Uterus (tissue), 4 donors: ENCODE measurements at regions of chr17 and their contacts with region 1.

Region 1: DNA sequence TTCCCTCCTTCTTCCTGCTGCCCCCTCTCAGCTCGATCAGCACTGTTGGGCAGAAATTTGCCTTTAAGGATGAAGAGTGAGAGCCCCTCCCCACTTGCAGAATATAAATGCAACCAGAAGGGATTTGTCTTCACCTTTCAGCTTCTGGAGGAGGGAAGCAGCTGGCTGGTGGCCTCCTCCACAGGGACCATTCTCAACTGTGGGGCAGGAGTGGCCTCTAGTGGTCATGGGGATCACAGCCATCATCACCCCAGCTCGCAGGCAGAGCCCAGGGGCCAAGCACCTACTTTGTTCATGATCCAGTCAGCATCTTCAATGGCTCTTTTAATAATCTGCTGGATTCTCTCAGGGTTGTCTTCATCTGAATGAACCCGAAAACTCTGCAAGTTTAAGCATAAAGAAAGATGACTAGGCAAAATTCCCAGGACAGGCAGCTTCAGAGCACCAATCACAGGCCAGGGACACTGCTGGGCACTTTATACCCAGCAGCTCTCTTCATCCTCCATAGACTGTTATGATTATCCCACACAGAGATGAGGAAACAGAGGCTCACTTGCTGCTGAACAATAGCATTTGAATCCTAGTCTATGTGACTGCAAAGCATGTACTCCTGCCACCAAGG is 13.1 kb downstream of the LYRM9 start:
- DNase-seq: peak; percentile 39 to 67
- H3K4me3 ChIP-seq: no peak overlapping the region
- H3K27ac ChIP-seq: no peak overlapping the region
- H3K4me1 ChIP-seq: no peaks in the 10 kb centered on the region
- H3K27me3 ChIP-seq: no peaks in the 10 kb centered on the region
- CTCF ChIP-seq: peak; percentile 48 to 68 (median 55)
- POLR2A ChIP-seq: no peak

Region 2: DNA sequence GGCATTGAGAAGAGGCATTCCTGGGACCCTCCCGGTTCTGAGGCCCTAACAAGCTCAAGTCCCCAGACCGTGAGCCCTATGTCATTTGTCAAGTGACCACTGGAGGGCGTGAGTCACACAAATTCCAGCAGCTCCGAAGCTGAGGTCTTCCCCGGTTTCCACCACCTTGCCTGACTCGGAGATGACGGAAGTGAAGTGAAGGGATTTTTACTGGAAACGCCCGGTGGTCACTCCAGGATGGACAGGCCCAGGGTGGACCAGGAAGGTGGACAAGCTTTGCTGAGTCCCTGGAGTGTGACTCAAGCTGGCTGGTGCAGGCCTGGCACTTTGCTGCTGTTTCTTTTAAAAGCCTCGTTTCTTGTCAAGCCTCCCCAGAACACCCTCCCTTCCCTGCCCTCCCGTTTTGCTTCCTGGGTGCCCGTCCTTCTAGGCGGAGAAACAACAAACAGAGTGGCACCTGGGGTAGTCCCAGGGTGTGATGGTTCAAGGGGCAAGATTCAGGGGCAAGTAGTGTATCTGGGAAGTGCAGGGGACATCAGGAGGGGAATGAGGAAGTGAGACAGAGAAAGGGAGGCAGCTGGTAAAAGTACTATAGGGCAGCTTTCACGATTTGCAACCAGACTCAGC is 74.5 kb before region 1 on chr17:
- intact Hi-C with region 1: loop called (anchors 10 kb)
- DNase-seq: peak; percentile 72 to 78
- H3K4me3 ChIP-seq: peak overlapping the region in 1 of 2 donors; percentile 24
- H3K27ac ChIP-seq: no peak overlapping the region
- H3K4me1 ChIP-seq: no peaks in the 10 kb centered on the region
- H3K27me3 ChIP-seq: no peaks in the 10 kb centered on the region
- CTCF ChIP-seq: peak; percentile 66 to 81 (median 72)
- POLR2A ChIP-seq: no peak

Region 3: GRCh38 chr17:27929990-27930389 is 49.9 kb after region 1 on chr17:
- intact Hi-C with region 1: no loop called
- DNase-seq: no peak
- H3K4me3 ChIP-seq: no peak overlapping the region
- H3K27ac ChIP-seq: no peak overlapping the region
- H3K4me1 ChIP-seq: no peaks in the 10 kb centered on the region
- H3K27me3 ChIP-seq: no peaks in the 10 kb centered on the region
- CTCF ChIP-seq: no peak
- POLR2A ChIP-seq: no peak

Region 4: DNA sequence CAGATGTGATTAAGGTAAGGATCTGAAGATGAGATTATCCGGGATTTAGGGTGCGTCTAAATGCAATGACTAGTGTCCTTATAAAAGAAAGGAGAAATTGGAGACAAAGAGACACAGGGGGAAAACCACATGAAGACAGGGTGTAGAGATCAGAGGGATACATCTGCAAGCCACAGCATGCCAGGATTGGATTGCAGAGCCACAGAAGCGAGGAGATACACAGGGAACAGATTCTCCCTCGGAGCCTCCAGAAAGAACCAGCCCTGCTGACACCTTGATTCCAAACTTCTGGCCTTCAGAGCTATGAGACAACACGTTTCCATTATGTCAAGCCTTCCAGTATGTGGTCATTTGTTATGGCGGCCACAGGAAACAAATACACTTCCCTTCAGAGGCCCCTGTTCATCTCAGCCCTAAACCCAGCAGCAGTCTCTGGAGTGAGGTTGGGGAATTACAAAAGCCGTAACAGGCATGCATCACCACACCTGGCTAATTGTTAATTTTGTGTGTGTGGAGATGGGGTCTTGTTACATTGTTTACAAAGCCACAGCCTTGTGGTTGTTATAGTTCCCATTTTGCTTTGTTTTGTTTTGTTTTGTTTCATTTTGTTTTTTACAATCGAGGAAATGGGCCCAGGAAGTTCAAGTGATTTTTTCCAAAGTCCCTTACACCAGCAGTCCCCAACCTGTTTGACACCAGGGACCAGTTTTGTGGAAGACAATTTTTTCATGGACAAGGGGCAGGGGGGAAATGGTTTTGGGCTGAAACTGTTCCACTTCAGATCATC is 64.6 kb after region 1 on chr17:
- intact Hi-C with region 1: no loop called
- DNase-seq: no peak
- H3K4me3 ChIP-seq: no peak overlapping the region
- H3K27ac ChIP-seq: no peak overlapping the region
- H3K4me1 ChIP-seq: no peaks in the 10 kb centered on the region
- H3K27me3 ChIP-seq: no peaks in the 10 kb centered on the region
- CTCF ChIP-seq: no peak
- POLR2A ChIP-seq: no peak

Region 5: DNA sequence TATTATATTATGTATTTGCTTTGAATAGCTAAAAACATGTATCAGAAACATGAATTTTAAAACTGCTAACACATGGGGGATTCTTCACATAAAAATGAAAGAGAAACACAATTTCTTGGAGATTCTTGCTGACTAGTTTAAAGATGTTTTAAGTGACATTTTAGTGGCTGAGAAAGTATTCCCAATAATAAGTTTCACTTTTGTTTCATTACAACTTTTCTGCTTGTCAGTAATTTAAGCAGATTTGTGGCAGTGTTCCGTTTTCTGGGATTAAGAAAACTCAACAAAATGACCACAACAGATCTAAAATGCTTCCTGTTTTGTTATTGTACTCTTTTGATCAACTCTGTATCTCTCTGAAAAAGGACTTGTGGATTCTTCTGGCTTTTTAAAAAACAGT is 238.3 kb after region 1 on chr17:
- intact Hi-C with region 1: no loop called
- DNase-seq: no peak
- H3K4me3 ChIP-seq: no peak overlapping the region
- H3K27ac ChIP-seq: no peak overlapping the region
- H3K4me1 ChIP-seq: no peaks in the 10 kb centered on the region
- H3K27me3 ChIP-seq: no peaks in the 10 kb centered on the region
- CTCF ChIP-seq: no peak
- POLR2A ChIP-seq: no peak